H1 (cell line): ENCODE measurements at regions of chr17 and their contacts with region 1.

Region 1: GRCh38 chr17:7136266-7136877 is 21.8 kb upstream of the ASGR2 start:
- DNase-seq: peak in 1 of 2 experiments; percentile 84
- H3K4me3 ChIP-seq: no peak overlapping the region
- H3K27ac ChIP-seq: no peak overlapping the region
- H3K4me1 ChIP-seq: peaks cover 0 to 29% (median 17%) of the 10 kb centered on the region in 4 experiments; a peak in 6 of 7 replicates
- H3K27me3 ChIP-seq: no peaks in the 10 kb centered on the region; a peak in 1 of 7 replicates
- CTCF ChIP-seq: peak; percentile 70 to 81 (median 77)
- EP300 ChIP-seq: no peak
- POLR2A ChIP-seq: no peak
- RAD21 ChIP-seq: peak; percentile 90 to 92

Region 2: DNA sequence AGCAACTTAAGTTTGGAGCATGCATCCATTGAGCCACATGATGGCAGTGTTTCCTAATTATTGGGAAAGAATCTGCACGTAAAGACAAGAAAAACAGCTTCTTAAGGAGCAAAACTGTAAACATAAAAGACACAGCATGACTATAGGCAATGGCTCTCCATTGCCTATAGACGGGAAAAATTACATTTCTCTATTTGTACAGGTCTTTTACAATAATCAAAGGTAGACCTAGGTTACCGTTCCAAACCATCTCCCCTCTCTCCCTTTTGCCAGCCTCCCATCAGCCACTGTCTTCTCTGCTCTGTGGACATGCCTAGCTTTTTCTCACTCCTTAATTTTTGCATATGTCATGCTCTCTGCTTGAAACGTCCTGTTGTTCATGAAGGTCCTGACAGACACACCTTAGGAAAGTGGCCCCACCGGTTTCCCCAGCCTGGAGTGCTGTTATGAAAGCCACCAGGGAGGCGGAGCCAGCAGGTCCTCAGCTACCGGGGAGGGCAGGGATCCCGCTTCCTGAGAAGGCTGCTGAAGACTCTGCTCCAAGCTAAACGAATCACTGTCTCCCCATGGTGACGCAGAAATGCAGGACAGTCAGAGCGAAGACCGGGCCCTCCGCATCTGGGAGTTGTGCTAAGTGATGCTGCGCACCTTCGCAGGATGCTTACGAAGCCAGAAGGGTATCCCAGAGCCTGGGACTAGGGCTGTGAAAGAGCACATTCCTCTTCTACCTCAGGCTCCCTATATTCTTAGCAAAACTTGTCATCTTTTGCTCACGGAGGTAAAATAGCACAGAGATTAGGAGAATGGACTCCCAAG is 90.3 kb before region 1 on chr17:
- CTCF ChIA-PET with region 1: interaction called, 434 read pairs
- POLR2A ChIA-PET with region 1: interaction called, 13 read pairs
- DNase-seq: peak in 1 of 2 experiments; percentile 72
- H3K4me3 ChIP-seq: peak overlapping the region; percentile 30 to 64 (median 34); a peak in 7 of 8 replicates
- H3K27ac ChIP-seq: no peak overlapping the region
- H3K4me1 ChIP-seq: peaks cover 0 to 18% (median 16%) of the 10 kb centered on the region in 4 experiments; a peak in 5 of 7 replicates
- H3K27me3 ChIP-seq: peaks cover 3 to 33% (median 32%) of the 10 kb centered on the region in 4 experiments
- CTCF ChIP-seq: peak in 2 of 3 experiments; percentile 53 to 68; a peak in 3 of 4 replicates
- EP300 ChIP-seq: no peak
- POLR2A ChIP-seq: no peak
- RAD21 ChIP-seq: peak; percentile 89 to 91

Region 3: DNA sequence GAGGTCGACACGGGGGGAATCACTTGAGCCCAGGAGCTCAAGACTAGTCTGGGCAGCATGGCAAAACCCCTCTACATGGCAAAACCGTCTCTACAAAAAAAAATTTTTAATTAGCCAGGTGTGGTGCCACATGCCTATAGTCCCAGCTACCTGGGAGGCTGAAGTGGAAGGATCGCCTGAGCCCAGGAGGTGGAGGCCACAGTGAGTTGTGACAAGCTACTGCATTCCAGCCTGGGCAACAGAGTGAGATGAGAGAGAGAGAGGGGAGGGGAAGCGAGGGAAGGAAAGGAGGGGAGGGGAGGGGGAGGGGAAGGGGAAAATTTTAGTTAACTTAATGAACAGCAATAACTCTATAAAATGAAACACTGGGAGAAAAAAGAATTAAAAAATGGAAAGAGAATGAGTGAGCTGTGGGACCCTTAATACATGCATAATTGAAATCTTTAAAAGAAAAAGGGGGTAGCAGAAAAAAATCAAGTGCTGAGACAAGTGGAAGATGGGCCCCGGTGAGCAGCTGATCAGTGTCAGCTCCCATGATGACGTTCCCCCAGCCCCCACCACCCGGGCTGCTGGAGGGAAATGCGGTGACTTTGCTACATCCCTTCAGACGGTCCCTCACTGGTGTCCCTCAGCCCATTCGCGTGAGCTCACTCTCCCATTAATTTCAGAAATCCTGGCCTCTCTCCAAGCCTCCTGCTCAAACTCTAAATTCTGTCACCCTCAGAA is 24.4 kb before region 1 on chr17:
- CTCF ChIA-PET with region 1: interaction called, 21 read pairs
- POLR2A ChIA-PET with region 1: interaction called, 4 read pairs
- DNase-seq: no peak
- H3K4me3 ChIP-seq: no peak overlapping the region
- H3K27ac ChIP-seq: no peak overlapping the region
- H3K4me1 ChIP-seq: peaks cover 0 to 12% (median 4%) of the 10 kb centered on the region in 4 experiments; a peak in 4 of 7 replicates
- H3K27me3 ChIP-seq: no peaks in the 10 kb centered on the region
- CTCF ChIP-seq: no peak
- EP300 ChIP-seq: no peak
- POLR2A ChIP-seq: no peak
- RAD21 ChIP-seq: no peak

Region 4: GRCh38 chr17:7147772-7148171 is 11.4 kb after region 1 on chr17:
- CTCF ChIA-PET with region 1: interaction called, 53 read pairs
- POLR2A ChIA-PET with region 1: interaction called, 3 read pairs
- DNase-seq: no peak
- H3K4me3 ChIP-seq: no peak overlapping the region
- H3K27ac ChIP-seq: no peak overlapping the region; the same call in 1 of the 2 replicates
- H3K4me1 ChIP-seq: peaks cover 0 to 5% (median 0%) of the 10 kb centered on the region in 4 experiments; a peak in 3 of 7 replicates
- H3K27me3 ChIP-seq: no peaks in the 10 kb centered on the region
- CTCF ChIP-seq: peak in 1 of 3 experiments; percentile 20; a peak in 1 of 4 replicates
- EP300 ChIP-seq: no peak
- POLR2A ChIP-seq: no peak
- RAD21 ChIP-seq: peak in 1 of 2 experiments; percentile 7; a peak in 1 of 4 replicates

Region 5: GRCh38 chr17:7177196-7177953 is 41.0 kb after region 1 on chr17:
- CTCF ChIA-PET with region 1: interaction called, 42 read pairs
- POLR2A ChIA-PET with region 1: interaction called, 3 read pairs
- DNase-seq: peak in 1 of 2 experiments; percentile 90
- H3K4me3 ChIP-seq: peak overlapping the region; percentile 52 to 86 (median 58)
- H3K27ac ChIP-seq: no peak overlapping the region
- H3K4me1 ChIP-seq: peaks cover 0 to 23% (median 11%) of the 10 kb centered on the region in 4 experiments; a peak in 6 of 7 replicates
- H3K27me3 ChIP-seq: peaks cover 0 to 28% (median 21%) of the 10 kb centered on the region in 4 experiments; a peak in 6 of 7 replicates
- CTCF ChIP-seq: peak; percentile 76 to 92 (median 91)
- EP300 ChIP-seq: peak in 1 of 2 experiments; percentile 52; a peak in 1 of 3 replicates
- POLR2A ChIP-seq: peak in 1 of 2 experiments; percentile 28; a peak in 1 of 3 replicates
- RAD21 ChIP-seq: peak; percentile 84